ENCODE measurements at regions of chr5 and their contacts with region 1.

Region 1: GRCh38 chr5:29822521-29822920 is 1371.0 kb upstream of the CDH6 start:
- DNase-seq: no peak
- ATAC-seq: no peak
- H3K4me3 ChIP-seq: no peak overlapping the region
- H3K27ac ChIP-seq: no peak overlapping the region
- H3K4me1 ChIP-seq: no peaks in the 10 kb centered on the region
- H3K27me3 ChIP-seq: no peaks in the 10 kb centered on the region
- CTCF ChIP-seq: no peak
- POLR2A ChIP-seq: no peak

Region 2: DNA sequence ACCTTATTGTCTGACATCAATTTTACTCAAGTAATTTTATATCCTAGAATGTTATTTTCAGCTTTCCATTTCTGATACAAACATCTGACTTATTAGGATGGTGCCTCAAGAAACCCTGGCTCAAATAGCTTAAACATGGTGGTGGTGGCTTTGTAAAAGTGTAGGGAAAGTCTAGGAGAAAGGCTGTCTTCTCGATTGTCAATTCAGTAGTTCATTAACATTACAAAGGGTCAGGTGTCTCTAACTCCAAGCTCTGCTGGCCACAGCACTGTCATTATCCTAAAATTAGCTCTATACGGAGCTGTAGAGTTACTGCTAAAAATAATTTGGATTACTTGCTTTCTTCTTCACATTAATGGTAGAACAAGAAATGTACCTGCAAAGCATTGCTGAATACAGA is 10.9 kb after region 1 on chr5:
- intact Hi-C with region 1: no loop called
- DNase-seq: no peak
- ATAC-seq: no peak
- H3K4me3 ChIP-seq: no peak overlapping the region
- H3K27ac ChIP-seq: no peak overlapping the region
- H3K4me1 ChIP-seq: no peaks in the 10 kb centered on the region
- H3K27me3 ChIP-seq: no peaks in the 10 kb centered on the region
- CTCF ChIP-seq: no peak
- POLR2A ChIP-seq: no peak

Region 3: GRCh38 chr5:29845206-29845605 is 22.7 kb after region 1 on chr5:
- intact Hi-C with region 1: loop called in 1 of 10 experiments (anchors 2 kb)
- DNase-seq: no peak
- ATAC-seq: no peak
- H3K4me3 ChIP-seq: no peak overlapping the region
- H3K27ac ChIP-seq: no peak overlapping the region
- H3K4me1 ChIP-seq: no peaks in the 10 kb centered on the region
- H3K27me3 ChIP-seq: no peaks in the 10 kb centered on the region
- CTCF ChIP-seq: no peak
- POLR2A ChIP-seq: no peak

Region 4: DNA sequence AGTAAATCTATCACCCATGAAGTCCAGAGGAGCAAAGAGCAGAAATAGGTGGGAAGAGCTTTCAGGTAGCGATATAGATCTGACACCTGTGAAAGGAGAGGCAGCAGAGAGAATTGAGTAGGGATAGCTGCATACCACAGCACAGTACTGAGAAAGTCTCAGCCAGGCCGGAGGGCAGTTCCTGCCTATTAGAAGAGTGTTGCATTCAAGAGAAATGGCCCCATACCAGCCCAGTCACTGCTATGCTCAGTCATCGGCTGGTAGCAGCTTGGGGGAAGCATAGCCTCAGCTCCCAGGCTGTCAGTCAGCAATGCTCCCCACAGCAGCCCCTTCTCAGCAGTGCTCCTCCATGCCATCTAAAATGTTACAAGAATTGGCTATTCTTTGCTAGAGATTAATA is 1085.8 kb after region 1 on chr5:
- intact Hi-C with region 1: no loop called
- DNase-seq: peak in 2 of 5 donors; percentile 16 to 19
- ATAC-seq: peak in 1 of 4 donors; percentile 55
- H3K4me3 ChIP-seq: no peak overlapping the region
- H3K27ac ChIP-seq: no peak overlapping the region
- H3K4me1 ChIP-seq: no peaks in the 10 kb centered on the region
- H3K27me3 ChIP-seq: no peaks in the 10 kb centered on the region
- CTCF ChIP-seq: no peak
- POLR2A ChIP-seq: no peak

Measured in heart left ventricle (tissue), 16 donors.